GM10248 (cell line): ENCODE measurements at regions of chr19 and their contacts with region 1.

Region 1: GRCh38 chr19:10095948-10096621 is 6.4 kb downstream of the ANGPTL6 start:
- DNase-seq: peak; percentile 96
- CTCF ChIP-seq: no peak

Region 2: GRCh38 chr19:10106100-10106936 is 10.2 kb after region 1 on chr19 and contains the start of gene PPAN:
- CTCF ChIA-PET with region 1: interaction called, 163 read pairs
- POLR2A ChIA-PET with region 1: interaction called, 5 read pairs
- DNase-seq: peak; percentile 98
- CTCF ChIP-seq: no peak

Region 3: DNA sequence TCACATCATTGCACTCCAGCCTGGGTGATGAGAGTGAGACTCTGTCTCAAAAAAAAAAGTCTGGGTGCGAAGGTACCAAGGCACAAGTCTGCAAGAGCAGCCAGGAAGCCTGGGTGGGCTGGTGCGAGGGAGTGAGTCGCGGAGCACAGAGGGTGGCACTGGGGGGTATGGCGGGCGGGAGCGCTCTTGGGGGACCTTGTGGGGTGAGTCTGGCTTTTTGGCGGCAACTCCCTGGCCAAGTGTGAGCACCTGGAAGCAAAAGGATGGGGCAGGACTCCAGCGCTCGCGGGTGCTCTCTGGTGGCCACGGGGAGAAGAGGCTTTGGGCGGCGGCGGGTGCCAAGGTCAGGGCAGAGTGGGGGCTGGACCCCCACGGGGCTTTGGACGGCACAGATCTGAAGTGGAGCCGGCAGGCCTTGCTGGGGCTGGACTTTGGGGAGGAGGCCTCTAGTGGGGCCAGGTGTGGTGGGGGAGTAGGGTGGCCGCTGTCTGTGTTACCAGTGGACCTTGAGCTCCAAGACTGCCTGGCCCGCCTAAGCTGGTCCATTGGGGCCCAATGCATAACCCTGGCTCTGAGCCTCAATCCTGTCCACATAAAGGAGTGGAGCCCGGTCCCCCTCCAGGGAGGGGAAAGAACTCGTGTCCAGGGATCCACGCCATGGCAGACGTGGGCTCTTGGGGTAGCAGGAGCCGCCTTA is 17.0 kb after region 1 on chr19:
- CTCF ChIA-PET with region 1: interaction called, 163 read pairs
- POLR2A ChIA-PET with region 1: interaction called, 10 read pairs
- DNase-seq: peak; percentile 59
- CTCF ChIP-seq: peak; percentile 81